ENCODE measurements at regions of chr17 and their contacts with region 1.

Region 1: DNA sequence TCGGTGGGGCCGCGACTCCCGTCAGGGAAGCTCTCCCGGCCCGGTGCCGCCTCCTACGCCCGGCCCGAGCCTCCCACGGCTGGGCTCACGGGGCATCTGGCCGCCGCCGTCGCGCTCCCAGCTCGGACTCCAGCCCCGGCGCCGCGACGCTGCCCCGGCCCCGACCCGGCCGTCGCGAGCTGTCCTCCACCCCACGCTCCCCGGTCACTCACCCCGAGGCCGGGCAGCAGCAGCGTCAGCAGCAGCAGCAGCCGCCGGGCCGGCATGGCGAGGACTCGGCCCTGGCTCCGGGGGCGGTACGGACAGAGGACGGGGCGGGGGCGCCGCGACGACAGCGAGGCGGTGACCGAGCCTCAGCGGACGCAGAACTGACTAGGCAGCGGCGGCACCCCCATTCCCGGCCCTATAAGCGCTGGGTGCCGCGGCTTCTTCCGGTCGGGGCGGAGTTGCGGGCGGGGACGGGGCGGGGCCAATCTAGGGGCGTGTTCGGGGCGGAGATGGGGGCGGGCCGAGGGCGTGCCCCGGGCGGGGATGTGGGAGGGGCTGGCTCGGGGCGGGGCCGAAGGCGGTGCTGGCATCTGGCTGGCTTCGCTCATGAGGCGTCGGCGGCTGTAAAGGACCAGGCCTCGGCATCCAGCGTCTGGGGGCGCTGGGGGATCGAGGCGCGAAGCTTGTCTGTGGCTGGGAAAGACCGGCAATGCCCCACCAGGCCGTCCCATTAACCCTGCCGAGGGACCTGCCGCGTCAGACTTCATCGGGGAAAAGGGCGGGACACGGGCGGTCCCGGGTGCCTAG is at the start of gene ERN1:
- DNase-seq: peak; percentile 92 to 95
- ATAC-seq: peak; percentile 91
- total RNA-seq, gene ERN1: 19.9 to 25.6 TPM

Region 2: DNA sequence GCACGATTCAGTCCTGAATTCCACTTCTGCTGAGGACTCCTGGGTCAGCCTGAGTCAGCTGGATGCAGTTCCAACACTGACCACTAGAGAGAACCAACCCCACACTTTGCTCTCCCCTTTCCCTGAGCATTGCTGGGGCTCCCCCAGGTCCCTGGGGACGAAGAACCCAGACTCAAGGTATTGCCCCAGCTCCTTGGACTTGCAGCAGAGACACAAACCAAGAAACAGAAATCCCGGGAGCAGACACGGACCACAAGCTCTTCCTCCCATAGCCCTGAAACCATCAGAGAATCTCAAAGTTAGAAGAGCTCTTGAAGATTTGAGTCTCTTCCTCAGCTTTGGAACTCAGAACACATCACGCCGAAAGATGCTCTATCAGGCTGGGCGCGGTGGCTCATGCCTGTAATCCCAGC is 210.6 kb before region 1 on chr17:
- intact Hi-C with region 1: loop called (anchors 10 kb)
- DNase-seq: peak; percentile 32 to 68
- ATAC-seq: peak; percentile 83

Region 3: DNA sequence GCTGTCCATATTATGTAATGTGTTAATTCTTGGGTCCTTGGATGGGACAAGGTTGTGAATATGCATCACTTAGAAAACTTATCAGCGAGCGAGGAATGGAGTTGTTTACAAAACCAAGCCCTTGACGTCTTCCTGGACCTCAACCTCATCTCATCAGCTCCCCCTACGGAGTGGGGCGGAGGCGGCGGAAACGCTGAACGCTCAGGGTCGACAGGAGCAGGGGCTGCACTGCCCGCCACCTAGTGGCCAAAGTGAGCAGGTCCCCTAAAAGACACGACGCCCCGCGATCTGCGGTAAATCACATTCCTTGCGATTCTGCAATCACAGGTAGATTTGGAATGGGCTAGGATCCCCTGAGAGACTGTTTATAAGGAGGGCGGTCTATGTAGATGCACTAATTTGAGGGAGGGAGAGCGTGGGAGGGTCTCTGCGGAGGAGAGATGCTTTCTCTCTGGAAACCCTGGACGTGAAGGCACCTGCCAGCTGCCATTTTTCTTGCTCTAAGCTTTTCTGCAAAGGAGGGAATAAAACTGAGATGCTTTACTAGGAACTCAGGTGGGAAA is 104.1 kb before region 1 on chr17:
- intact Hi-C with region 1: loop called (anchors 2 to 10 kb)
- DNase-seq: peak; percentile 81 to 87
- ATAC-seq: peak; percentile 86

Region 4: GRCh38 chr17:64036198-64036922 is 93.6 kb before region 1 on chr17:
- intact Hi-C with region 1: loop called in 1 of 2 experiments (anchors 10 kb)
- DNase-seq: no peak
- ATAC-seq: no peak

Region 5: DNA sequence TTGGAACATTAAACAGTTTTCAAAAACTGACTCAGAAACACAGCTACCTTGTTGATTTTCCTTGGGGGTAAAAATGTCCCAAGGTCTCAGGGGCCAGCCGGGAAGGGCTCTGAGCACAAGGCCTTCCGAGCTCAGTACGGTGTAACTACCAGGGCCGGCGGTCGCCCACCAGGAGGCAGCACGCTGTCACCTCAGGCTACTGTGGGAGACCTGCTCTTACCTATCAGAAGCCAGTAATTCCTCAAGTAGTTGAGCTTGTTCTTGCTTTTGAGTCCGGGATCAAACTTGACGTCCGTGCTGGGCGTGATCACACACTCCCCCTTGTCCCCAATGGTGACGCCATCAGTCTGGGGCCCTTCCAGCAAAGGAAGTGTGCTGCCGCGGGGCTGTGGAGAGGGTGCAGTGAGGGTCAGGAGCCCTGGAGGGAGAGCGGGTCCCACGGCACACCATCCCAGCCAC is 66.2 kb before region 1 on chr17:
- intact Hi-C with region 1: loop called in 1 of 2 experiments (anchors 10 kb)
- DNase-seq: peak; percentile 68 to 86
- ATAC-seq: peak; percentile 83

Region 6: GRCh38 chr17:64074704-64075426 is 55.1 kb before region 1 on chr17:
- intact Hi-C with region 1: no loop called
- DNase-seq: no peak
- ATAC-seq: peak; percentile 40

Region 7: DNA sequence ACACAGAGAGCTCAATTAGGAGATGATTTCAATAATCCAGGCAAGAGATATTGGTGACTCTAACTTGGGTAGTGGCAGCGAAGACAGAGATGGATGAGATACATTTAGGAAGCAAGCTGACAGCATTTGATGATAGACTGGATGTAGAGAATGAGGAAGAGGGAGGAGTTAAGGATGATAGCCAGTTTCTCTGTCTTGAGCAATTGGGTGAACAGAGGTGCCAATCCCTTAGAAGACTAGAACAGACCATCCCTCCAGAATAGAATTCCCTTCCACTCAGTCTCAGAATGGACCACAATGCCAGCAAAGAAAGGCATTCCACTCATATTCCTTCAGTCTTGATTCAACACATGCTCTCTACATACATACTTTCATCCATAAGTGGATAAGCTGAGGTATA is 349.7 kb after region 1 on chr17:
- intact Hi-C with region 1: no loop called
- DNase-seq: no peak
- ATAC-seq: no peak

Region 8: DNA sequence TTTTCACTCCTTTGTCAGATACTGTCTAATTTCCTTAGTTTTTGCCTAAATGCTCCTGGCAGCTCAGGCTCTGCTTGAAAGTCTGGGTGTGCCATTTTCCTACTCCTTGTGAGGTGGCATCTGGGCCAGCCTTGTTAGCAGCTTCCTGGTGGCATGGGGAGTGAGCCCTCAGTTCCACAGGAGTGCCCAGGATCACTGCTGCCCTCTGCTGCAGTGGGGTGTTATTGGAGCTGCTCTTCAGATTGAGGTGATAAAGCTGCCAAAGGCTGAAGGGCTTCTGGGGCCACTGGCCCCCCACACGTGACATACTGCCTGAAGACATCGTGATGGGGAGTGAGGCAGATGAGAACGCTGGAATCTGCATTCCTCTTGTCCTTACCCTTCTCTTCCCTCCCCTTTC is 404.2 kb after region 1 on chr17:
- intact Hi-C with region 1: no loop called
- DNase-seq: peak in 1 of 2 donors; percentile 12
- ATAC-seq: peak; percentile 82